Cardiac septum (tissue), 1 donor: ENCODE measurements at regions of chr1 and their contacts with region 1.

Region 1: DNA sequence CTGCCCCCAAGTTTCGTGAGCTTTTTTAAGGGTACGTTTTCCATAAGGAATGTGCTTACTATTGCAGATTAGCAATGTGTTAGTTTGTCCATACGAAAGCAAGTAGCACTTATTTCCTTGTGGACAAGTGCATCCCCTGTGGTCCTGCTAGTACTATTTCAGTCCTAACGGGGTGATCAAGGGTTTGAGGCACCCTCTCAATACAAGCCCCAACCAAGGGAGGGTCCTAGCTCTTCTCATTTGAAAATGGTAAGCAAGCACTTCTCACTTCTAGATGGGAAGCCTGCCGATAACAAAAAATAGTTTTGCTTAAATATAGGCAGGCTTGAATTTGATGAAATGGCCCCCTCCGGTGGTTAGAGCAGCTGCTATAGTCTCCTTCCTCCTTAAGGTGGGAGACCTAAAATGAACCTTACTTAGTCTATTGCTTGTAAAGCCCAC is 64.0 kb upstream of the HMCN1 start:
- DNase-seq: no peak

Region 2: DNA sequence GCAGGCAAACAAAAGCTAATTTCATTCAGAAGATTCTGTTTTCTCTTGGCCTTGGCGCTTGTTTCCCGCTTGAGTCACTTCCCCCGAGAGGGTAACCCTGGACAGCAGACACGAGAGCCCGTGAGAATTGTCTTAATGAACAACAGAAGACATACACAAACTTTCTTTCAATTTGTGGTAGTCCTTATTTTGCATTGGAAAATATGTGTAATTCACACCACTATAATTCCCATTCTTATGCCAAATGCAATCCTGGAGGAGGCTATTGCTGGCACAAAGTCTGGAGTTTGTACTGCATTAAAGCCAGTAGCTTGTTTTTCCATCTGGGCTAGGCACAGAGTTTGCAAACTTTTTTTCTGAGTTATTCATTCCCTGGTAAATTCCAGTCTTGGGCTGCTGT is 243.4 kb before region 1 on chr1:
- intact Hi-C with region 1: loop called (anchors 10 kb)
- DNase-seq: no peak

Region 3: DNA sequence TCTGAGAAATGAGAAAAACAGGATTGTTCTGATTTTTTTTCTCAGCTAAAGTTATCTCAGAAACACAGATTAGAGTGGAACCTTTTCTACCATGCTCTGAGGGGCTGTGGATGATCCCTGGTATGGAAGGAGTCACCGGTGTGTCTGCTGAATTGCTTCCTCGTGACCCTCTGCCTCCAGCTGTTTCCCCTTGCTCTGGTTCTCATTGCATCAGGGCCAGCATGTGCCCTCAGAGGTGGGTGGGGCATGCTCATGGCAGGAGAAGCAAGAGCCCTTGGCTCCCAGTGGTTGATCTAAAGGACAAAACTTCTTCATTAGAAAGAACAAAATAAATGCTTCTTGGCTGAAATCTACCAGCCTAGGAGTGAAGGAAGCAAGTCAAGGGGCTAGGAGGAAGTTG is 119.2 kb before region 1 on chr1:
- intact Hi-C with region 1: no loop called
- DNase-seq: peak; percentile 75

Region 4: GRCh38 chr1:185595835-185596667 is 74.2 kb before region 1 on chr1:
- intact Hi-C with region 1: loop called (anchors 5 kb)
- DNase-seq: no peak